PC-9 (cell line): ENCODE measurements at regions of chr7 and their contacts with region 1.

Region 1: DNA sequence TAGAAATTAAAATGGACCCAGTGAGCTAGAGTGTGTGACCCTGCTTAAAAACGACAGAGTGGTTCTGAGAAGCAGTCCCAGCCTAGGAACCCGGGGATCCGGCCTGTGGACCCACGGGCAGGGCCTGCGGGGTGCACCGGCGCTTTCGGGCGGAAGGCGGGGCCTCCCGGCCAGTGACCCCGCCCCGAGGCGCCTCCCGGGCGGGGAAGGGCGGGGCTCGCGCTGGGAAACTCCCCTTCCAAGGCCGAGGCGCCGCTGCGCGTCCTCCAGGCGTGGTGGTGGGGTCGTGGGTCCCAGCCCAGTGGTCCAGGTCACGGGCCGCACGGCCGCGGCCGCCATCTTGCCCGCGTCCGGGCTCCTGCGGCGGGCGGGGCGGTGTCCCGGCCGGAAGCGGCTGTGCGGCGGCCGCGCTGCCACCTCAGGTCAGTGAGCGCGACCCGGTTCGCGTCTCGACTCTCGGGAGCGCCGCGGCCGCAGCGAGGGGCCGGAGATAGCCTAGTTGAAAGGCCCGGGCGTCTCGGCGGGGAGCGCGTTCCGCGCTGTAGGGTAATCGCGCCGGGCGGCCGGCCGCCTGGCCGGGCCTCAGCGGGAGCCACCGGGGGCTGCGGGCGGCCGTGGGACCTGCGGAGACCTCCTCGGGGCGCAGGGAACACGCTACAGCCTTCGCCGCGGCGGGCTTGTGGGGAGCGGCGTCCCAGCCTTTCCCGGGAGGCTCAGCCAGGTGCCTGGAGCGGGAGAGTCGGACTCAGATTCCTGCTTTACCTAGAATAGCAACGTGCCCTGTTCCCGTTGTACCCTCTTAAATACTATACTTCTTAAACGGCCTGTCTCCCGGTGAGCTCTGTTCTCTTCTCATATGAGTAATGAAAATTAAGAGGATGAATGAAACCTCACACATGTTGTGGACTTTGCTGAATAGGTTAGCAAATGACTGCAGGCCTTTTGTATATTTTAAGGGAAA is at the start of gene MIOS:
- DNase-seq: peak; percentile 67 to 91
- H3K4me3 ChIP-seq: peak within 1 kb of the TSS; percentile 92
- H3K27ac ChIP-seq: peak within 1 kb of the TSS; percentile 97
- H3K4me1 ChIP-seq: peaks cover 64% of the 10 kb centered on the region
- H3K27me3 ChIP-seq: no peaks in the 10 kb centered on the region
- CTCF ChIP-seq: no peak
- total RNA-seq, gene MIOS: 35.8 and 42.0 TPM in 2 replicates

Region 2: DNA sequence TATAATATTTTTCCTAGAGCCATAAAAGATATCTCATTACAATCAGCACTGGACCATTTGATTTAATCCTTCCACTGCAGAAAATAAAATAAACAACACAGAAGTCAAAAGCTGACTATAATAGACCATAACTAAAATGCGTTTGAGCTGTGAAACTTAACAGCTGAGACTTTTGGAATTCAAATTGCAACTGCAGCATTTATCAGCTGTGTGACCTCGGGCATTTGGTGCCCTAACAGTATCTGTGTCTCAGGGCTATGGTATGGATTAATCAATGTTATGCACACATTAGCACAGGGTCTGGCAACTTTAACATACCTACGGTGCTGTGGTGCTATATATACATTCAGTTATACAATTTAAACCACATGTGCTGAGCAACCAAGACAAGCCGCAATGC is 191.4 kb before region 1 on chr7:
- CTCF ChIA-PET with region 1: no interaction called
- POLR2A ChIA-PET with region 1: no interaction called
- intact Hi-C with region 1: no loop called
- DNase-seq: no peak
- H3K4me3 ChIP-seq: no peak overlapping the region
- H3K27ac ChIP-seq: no peak overlapping the region
- H3K4me1 ChIP-seq: no peaks in the 10 kb centered on the region
- H3K27me3 ChIP-seq: no peaks in the 10 kb centered on the region
- CTCF ChIP-seq: no peak

Region 3: GRCh38 chr7:7614018-7614741 is 47.2 kb after region 1 on chr7:
- CTCF ChIA-PET with region 1: no interaction called
- POLR2A ChIA-PET with region 1: no interaction called
- intact Hi-C with region 1: no loop called
- DNase-seq: no peak
- H3K4me3 ChIP-seq: no peak overlapping the region
- H3K27ac ChIP-seq: no peak overlapping the region
- H3K4me1 ChIP-seq: no peaks in the 10 kb centered on the region
- H3K27me3 ChIP-seq: no peaks in the 10 kb centered on the region
- CTCF ChIP-seq: no peak

Region 4: DNA sequence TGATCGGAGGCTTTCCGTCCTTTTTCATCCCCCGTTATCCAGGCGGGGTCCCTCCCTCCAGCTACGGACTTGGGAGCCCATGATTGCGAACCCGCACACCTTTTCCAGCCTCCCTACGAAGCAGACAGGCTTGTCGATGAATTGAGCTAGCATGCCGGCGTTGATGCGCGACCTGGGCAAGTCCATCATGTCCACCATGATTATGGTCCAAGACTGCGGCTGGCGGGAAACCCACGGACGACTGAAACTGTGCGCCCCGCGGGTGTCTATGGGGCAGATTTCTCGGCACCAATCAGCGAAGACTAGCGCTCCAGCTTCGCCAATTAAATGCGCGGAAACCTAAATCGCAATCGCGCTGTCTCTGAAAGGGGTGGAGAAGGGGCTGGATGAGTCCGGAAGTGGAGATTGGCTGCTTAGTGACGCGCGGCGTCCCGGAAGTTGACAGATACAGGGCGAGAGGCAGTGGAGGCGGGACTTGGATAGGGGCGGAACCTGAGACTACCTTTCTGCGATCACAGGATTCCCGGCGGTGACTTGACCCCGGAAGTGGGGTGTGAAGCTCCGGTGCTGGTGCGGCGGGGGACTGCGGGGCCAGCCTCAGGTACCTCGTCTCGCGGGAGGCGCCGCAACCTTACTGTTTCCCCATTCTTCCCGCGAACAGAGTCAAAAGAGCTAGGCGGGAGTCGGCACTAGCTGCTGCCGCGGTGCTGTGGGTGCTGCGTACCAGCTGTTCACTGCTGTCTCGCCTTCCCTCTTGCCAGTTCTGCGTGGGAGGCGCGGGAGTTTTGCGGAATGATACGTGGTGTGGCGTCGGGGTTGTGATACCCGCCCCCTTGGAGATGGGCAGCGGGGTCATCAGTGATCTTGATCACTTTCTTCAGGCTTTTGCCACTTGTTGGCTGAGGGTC is 73.5 kb after region 1 on chr7 and contains the start of gene UMAD1:
- CTCF ChIA-PET with region 1: no interaction called
- POLR2A ChIA-PET with region 1: no interaction called
- intact Hi-C with region 1: loop called (anchors 2 kb)
- DNase-seq: peak; percentile 99
- H3K4me3 ChIP-seq: peak within 1 kb of the TSS; percentile 83
- H3K27ac ChIP-seq: peak within 1 kb of the TSS; percentile 58
- H3K4me1 ChIP-seq: peaks cover 27% of the 10 kb centered on the region
- H3K27me3 ChIP-seq: no peaks in the 10 kb centered on the region
- CTCF ChIP-seq: no peak
- total RNA-seq, gene UMAD1: 15.5 and 20.5 TPM in 2 replicates

Region 5: DNA sequence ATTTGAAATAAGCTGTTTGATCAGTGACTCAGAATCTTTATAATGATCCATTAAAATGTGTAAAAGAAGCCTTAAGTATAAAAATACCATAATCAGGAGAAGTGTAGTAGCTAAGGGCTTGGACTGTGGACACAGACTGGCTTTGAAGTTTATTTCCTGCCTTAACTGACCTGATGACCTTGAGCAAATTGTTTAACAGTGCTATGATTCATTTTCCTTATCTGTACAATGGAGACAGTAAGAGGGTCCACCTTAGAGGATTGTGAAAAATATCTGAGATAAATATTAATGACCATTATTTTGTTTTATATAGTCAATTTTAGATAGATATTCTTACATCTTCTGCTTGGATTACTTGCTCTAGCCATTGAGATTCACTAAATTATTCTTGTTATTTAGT is 164.8 kb after region 1 on chr7:
- CTCF ChIA-PET with region 1: interaction called, 24 read pairs
- POLR2A ChIA-PET with region 1: no interaction called
- intact Hi-C with region 1: no loop called
- DNase-seq: no peak
- H3K4me3 ChIP-seq: no peak overlapping the region
- H3K27ac ChIP-seq: no peak overlapping the region
- H3K4me1 ChIP-seq: no peaks in the 10 kb centered on the region
- H3K27me3 ChIP-seq: no peaks in the 10 kb centered on the region
- CTCF ChIP-seq: no peak